ENCODE measurements at regions of chr10 and their contacts with region 1.

Region 1: GRCh38 chr10:101214446-101215396 is 14.5 kb downstream of the LBX1 start:
- DNase-seq: peak; percentile 81
- H3K4me3 Mint-ChIP-seq: peak overlapping the region; percentile 55
- H3K27ac Mint-ChIP-seq: no peak overlapping the region
- H3K4me1 Mint-ChIP-seq: peaks cover 32% of the 10 kb centered on the region
- H3K27me3 Mint-ChIP-seq: peaks cover 72% of the 10 kb centered on the region

Region 2: GRCh38 chr10:100470367-100470766 is 744.4 kb before region 1 on chr10:
- CTCF ChIA-PET with region 1: no interaction called
- intact Hi-C with region 1: no loop called
- DNase-seq: no peak
- H3K4me3 Mint-ChIP-seq: no peak overlapping the region
- H3K27ac Mint-ChIP-seq: no peak overlapping the region
- H3K4me1 Mint-ChIP-seq: no peaks in the 10 kb centered on the region
- H3K27me3 Mint-ChIP-seq: no peaks in the 10 kb centered on the region

Region 3: GRCh38 chr10:101161494-101162299 is 53.0 kb before region 1 on chr10:
- CTCF ChIA-PET with region 1: interaction called, 9 read pairs
- intact Hi-C with region 1: loop called (anchors 1 kb)
- DNase-seq: peak; percentile 87
- H3K4me3 Mint-ChIP-seq: peak overlapping the region; percentile 15
- H3K27ac Mint-ChIP-seq: no peak overlapping the region
- H3K4me1 Mint-ChIP-seq: peaks cover 13% of the 10 kb centered on the region
- H3K27me3 Mint-ChIP-seq: peaks cover 53% of the 10 kb centered on the region

Region 4: DNA sequence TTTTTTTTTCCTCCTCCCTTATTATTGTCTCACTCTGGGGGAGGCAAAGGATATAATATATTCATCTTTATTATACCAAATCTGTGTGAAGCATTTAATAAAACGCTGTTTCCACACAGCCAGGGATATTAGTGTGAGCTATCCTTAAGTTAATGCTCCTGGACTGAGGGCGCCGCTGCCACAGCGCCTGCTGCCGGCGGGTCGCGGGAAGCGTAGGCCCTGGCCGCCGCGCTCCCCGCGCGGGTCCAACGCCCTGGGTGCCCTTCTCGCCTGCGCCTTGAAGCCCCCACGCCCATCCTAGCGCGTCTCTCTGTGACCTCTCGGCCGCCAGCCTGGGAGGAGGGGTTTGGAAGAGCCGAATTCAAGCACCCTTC is 24.0 kb after region 1 on chr10:
- CTCF ChIA-PET with region 1: interaction called, 75 read pairs
- intact Hi-C with region 1: loop called (anchors 1 kb)
- DNase-seq: peak; percentile 41
- H3K4me3 Mint-ChIP-seq: no peak overlapping the region
- H3K27ac Mint-ChIP-seq: no peak overlapping the region
- H3K4me1 Mint-ChIP-seq: peaks cover 15% of the 10 kb centered on the region
- H3K27me3 Mint-ChIP-seq: peaks cover 72% of the 10 kb centered on the region

Region 5: GRCh38 chr10:101291331-101292193 is 76.8 kb after region 1 on chr10:
- CTCF ChIA-PET with region 1: interaction called, 74 read pairs
- intact Hi-C with region 1: loop called (anchors 1 kb)
- DNase-seq: peak; percentile 55
- H3K4me3 Mint-ChIP-seq: peak overlapping the region; percentile 69
- H3K27ac Mint-ChIP-seq: no peak overlapping the region
- H3K4me1 Mint-ChIP-seq: peaks cover 8% of the 10 kb centered on the region
- H3K27me3 Mint-ChIP-seq: peaks cover 58% of the 10 kb centered on the region

Region 6: GRCh38 chr10:101467286-101467770 is 252.6 kb after region 1 on chr10:
- CTCF ChIA-PET with region 1: interaction called, 10 read pairs
- intact Hi-C with region 1: loop called (anchors 1 kb)
- DNase-seq: peak; percentile 36
- H3K4me3 Mint-ChIP-seq: no peak overlapping the region
- H3K27ac Mint-ChIP-seq: no peak overlapping the region
- H3K4me1 Mint-ChIP-seq: peaks cover 5% of the 10 kb centered on the region
- H3K27me3 Mint-ChIP-seq: no peaks in the 10 kb centered on the region

Region 7: GRCh38 chr10:101576211-101576863 is 361.6 kb after region 1 on chr10:
- CTCF ChIA-PET with region 1: interaction called, 50 read pairs
- intact Hi-C with region 1: no loop called
- DNase-seq: no peak
- H3K4me3 Mint-ChIP-seq: no peak overlapping the region
- H3K27ac Mint-ChIP-seq: no peak overlapping the region
- H3K4me1 Mint-ChIP-seq: no peaks in the 10 kb centered on the region
- H3K27me3 Mint-ChIP-seq: no peaks in the 10 kb centered on the region